Heart right ventricle (tissue), 16 donors: ENCODE measurements at regions of chr12 and their contacts with region 1.

Region 1: DNA sequence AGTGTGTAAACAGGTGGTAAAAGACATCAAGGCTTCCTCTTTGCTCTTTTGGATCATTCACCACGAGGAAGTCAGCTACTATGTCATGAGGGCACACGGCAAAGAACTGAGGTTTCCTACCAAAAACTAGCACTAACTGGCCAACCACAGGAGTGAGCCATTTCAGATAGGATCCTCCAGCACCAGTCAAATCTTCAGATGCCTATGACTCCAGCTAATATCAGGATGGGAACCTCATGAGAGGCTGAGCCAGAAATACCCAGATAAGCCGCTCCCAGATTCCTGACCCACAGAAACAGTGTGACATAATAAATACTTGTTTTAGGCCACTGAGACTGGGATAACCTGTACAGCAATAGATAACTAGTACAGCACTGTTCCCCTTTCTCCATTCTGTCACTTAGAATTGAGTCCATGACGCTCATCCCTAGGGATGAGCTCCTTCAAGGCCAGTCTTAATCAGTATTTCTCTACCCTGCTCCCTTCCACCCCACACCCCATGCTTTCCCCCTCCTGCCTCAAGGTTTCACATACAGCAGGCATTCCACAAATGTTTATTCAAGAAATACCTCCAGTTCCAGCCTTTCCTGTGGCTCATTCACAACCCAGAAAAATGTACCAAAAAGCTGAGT is 68.4 kb downstream of the PPM1H start:
- DNase-seq: no peak
- ATAC-seq: peak in 7 of 8 donors; percentile 9 to 58 (median 37)
- H3K4me3 ChIP-seq: no peak overlapping the region
- H3K27ac ChIP-seq: peak overlapping the region in 9 of 10 donors; percentile 33 to 80 (median 59)
- H3K4me1 ChIP-seq: peaks cover 14 to 51% (median 36%) of the 10 kb centered on the region in 9 donors
- H3K27me3 ChIP-seq: no peaks in the 10 kb centered on the region
- CTCF ChIP-seq: no peak

Region 2: GRCh38 chr12:62900686-62901272 is 34.2 kb after region 1 on chr12:
- intact Hi-C with region 1: loop called in 1 of 10 experiments (anchors 5 kb)
- DNase-seq: no peak
- ATAC-seq: peak in 4 of 8 donors; percentile 52 to 81 (median 66)
- H3K4me3 ChIP-seq: no peak overlapping the region
- H3K27ac ChIP-seq: peak overlapping the region in 2 of 10 donors; percentile 9 to 71
- H3K4me1 ChIP-seq: peaks cover 2 to 60% (median 41%) of the 10 kb centered on the region in 9 donors
- H3K27me3 ChIP-seq: no peaks in the 10 kb centered on the region
- CTCF ChIP-seq: no peak

Region 3: GRCh38 chr12:62947364-62947763 is 80.8 kb after region 1 on chr12:
- intact Hi-C with region 1: no loop called
- DNase-seq: no peak
- ATAC-seq: no peak
- H3K4me3 ChIP-seq: no peak overlapping the region
- H3K27ac ChIP-seq: no peak overlapping the region
- H3K4me1 ChIP-seq: no peaks in the 10 kb centered on the region
- H3K27me3 ChIP-seq: peaks cover 0 to 4% (median 0%) of the 10 kb centered on the region in 7 donors
- CTCF ChIP-seq: no peak